Activated CD4-positive, alpha-beta T cell treated with anti-CD3 and anti-CD28 coated beads for 36 hours (primary cell): ENCODE measurements at regions of chr19 and their contacts with region 1.

Region 1: DNA sequence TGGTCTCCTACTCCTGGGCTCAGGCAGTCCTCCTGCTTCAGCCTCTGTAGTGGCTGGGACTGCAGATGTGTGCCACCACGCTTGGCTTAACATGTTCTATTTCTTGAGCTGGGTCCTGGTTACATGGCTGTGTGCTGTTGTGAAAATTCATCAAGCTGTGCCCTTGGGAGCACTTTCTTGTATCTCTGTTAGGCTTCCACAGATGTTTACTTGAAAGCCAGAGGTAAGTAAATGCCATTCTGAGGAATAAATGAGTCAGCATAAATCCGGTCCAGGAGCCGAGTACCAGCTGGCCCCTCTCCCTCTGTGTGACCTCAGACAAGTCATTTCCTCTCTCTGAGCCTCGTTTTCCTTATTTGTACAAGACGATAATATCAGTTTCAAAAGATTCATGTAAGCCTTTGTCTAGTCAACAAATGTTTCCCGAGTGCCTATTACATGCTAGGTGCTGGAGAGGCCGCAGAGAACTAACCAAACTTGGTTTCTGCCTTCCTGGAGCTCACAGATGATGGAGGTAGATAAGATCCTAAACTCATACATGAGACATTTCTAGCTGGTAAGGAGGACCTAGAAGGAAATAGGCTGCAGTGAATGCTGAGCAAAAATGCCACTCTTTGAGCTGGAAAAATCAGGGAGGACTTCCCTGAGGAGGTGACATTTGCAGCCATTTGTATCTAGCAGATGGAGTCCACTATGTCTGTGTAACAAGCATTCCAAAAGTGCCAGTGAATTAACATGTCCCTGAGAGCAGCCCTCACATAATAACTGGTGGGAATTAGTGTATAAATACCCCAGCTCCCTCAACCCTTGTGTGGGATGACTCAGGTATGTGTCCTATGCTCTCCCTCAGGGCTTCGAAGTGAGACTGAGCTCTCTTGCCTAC is 2.7 kb upstream of the RASAL3 start:
- DNase-seq: peak; percentile 80
- ATAC-seq: peak; percentile 62
- H3K4me3 Mint-ChIP-seq: peak overlapping the region; percentile 47
- H3K27ac Mint-ChIP-seq: peak overlapping the region; percentile 95
- H3K4me1 Mint-ChIP-seq: peaks cover 62% of the 10 kb centered on the region
- H3K27me3 Mint-ChIP-seq: peaks cover 3% of the 10 kb centered on the region

Region 2: DNA sequence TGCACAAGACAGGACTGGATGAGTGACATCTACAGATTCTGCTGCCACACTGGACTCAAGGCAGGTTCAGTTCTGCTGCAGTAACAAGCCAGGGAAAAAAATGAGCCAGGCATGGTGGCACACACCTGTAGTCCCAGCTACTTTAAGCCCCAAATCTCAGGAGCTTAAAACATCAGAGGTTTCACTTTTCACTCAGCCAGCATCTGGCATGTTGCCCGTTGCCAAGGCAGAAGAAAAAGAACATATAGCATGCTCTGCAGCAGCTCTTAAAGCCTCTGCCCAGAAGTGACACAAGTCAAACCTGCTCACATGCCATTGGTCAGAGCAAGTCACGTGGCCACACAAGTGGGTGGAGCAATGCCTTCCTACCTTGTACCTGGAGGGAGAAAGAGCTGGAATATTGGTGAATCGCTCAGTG is 1100.6 kb before region 1 on chr19:
- CTCF ChIA-PET with region 1: no interaction called
- POLR2A ChIA-PET with region 1: no interaction called
- intact Hi-C with region 1: loop called in 1 of 2 experiments (anchors 10 kb)
- DNase-seq: peak; percentile 95
- ATAC-seq: peak; percentile 50
- H3K4me3 Mint-ChIP-seq: peak overlapping the region; percentile 45
- H3K27ac Mint-ChIP-seq: peak overlapping the region; percentile 100
- H3K4me1 Mint-ChIP-seq: peaks cover 78% of the 10 kb centered on the region
- H3K27me3 Mint-ChIP-seq: no peaks in the 10 kb centered on the region

Region 3: GRCh38 chr19:15297416-15298224 is 169.5 kb before region 1 on chr19:
- CTCF ChIA-PET with region 1: interaction called, 4 read pairs
- POLR2A ChIA-PET with region 1: interaction called, 4 read pairs
- intact Hi-C with region 1: loop called in 1 of 2 experiments (anchors 1 kb)
- DNase-seq: peak; percentile 55
- ATAC-seq: no peak
- H3K4me3 Mint-ChIP-seq: peak overlapping the region; percentile 30
- H3K27ac Mint-ChIP-seq: peak overlapping the region; percentile 91
- H3K4me1 Mint-ChIP-seq: peaks cover 97% of the 10 kb centered on the region
- H3K27me3 Mint-ChIP-seq: no peaks in the 10 kb centered on the region

Region 4: GRCh38 chr19:15432629-15433518 is 34.2 kb before region 1 on chr19:
- CTCF ChIA-PET with region 1: no interaction called
- POLR2A ChIA-PET with region 1: interaction called, 4 read pairs
- intact Hi-C with region 1: loop called in 1 of 2 experiments (anchors 1 kb)
- DNase-seq: peak; percentile 97
- ATAC-seq: peak; percentile 87
- H3K4me3 Mint-ChIP-seq: peak overlapping the region; percentile 87
- H3K27ac Mint-ChIP-seq: peak overlapping the region; percentile 91
- H3K4me1 Mint-ChIP-seq: peaks cover 26% of the 10 kb centered on the region
- H3K27me3 Mint-ChIP-seq: no peaks in the 10 kb centered on the region

Region 5: GRCh38 chr19:15532779-15533521 is 65.9 kb after region 1 on chr19:
- CTCF ChIA-PET with region 1: interaction called, 5 read pairs
- POLR2A ChIA-PET with region 1: no interaction called
- intact Hi-C with region 1: loop called (anchors 1 kb)
- DNase-seq: peak; percentile 46
- ATAC-seq: peak; percentile 86
- H3K4me3 Mint-ChIP-seq: peak overlapping the region; percentile 19
- H3K27ac Mint-ChIP-seq: peak overlapping the region; percentile 57
- H3K4me1 Mint-ChIP-seq: peaks cover 41% of the 10 kb centered on the region
- H3K27me3 Mint-ChIP-seq: no peaks in the 10 kb centered on the region

Region 6: GRCh38 chr19:15544283-15544682 is 77.2 kb after region 1 on chr19:
- CTCF ChIA-PET with region 1: no interaction called
- POLR2A ChIA-PET with region 1: no interaction called
- intact Hi-C with region 1: no loop called
- DNase-seq: no peak
- ATAC-seq: no peak
- H3K4me3 Mint-ChIP-seq: no peak overlapping the region
- H3K27ac Mint-ChIP-seq: no peak overlapping the region
- H3K4me1 Mint-ChIP-seq: no peaks in the 10 kb centered on the region
- H3K27me3 Mint-ChIP-seq: no peaks in the 10 kb centered on the region